Naive thymus-derived CD4-positive, alpha-beta T cell (primary cell): ENCODE measurements at regions of chr3 and their contacts with region 1.

Region 1: GRCh38 chr3:53035825-53036619 is 9.9 kb downstream of the SFMBT1 start:
- DNase-seq: no peak
- ATAC-seq: peak; percentile 27
- H3K4me3 ChIP-seq: no peak overlapping the region
- H3K4me3 Mint-ChIP-seq: peak overlapping the region in 7 of 10 donors; percentile 21 to 66 (median 51)
- H3K27ac ChIP-seq: no peak overlapping the region
- H3K27ac Mint-ChIP-seq: peak overlapping the region in 7 of 9 donors; percentile 25 to 81 (median 68)
- H3K4me1 ChIP-seq: peaks cover 13 to 50% of the 10 kb centered on the region in 2 donors
- H3K4me1 Mint-ChIP-seq: peaks cover 36 to 83% (median 73%) of the 10 kb centered on the region in 7 donors
- H3K27me3 ChIP-seq: no peaks in the 10 kb centered on the region
- H3K27me3 Mint-ChIP-seq: no peaks in the 10 kb centered on the region

Region 2: DNA sequence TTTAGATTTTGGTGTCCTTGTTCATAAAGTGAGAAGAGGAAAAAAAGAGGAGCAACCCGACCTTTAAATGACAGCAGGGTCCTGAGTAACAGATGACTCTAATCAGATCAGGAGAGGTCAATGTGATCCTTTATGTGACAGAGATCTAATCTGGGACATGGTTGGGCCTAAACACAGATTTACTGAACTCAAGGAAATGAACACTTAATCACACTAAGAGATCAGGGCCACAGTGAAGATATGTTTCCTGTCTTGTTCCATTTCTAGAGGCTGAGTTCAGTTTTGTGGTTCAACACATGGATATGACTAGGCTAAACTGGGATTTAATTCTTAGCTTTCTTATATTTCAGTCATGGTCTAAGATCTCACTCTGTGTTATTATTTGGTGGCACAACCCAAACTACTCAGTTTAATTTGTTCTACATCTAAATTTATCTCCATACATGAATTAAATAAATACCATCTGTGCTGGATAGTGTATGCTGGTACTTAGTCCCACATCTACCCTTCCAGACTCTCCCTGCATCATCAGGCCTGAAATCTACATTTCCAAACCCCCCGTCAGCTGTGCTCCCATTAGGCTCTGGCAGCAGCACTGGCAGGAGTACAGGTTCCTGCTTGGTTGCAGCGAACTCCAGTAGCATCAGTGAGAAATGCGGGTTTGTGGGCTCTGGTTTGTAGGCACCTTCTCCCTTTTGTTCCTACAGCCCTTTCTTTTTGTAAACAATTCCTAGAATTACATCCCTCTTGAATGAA is 12.8 kb before region 1 on chr3:
- CTCF ChIA-PET with region 1: interaction called, 3 read pairs
- POLR2A ChIA-PET with region 1: interaction called, 10 read pairs
- intact Hi-C with region 1: loop called in 1 of 2 experiments (anchors 2 kb)
- DNase-seq: no peak
- ATAC-seq: no peak
- H3K4me3 ChIP-seq: no peak overlapping the region
- H3K4me3 Mint-ChIP-seq: peak overlapping the region in 7 of 10 donors; percentile 1 to 58 (median 21)
- H3K27ac ChIP-seq: no peak overlapping the region
- H3K27ac Mint-ChIP-seq: peak overlapping the region in 5 of 9 donors; percentile 32 to 83 (median 51)
- H3K4me1 ChIP-seq: peaks cover 11 to 20% of the 10 kb centered on the region in 2 donors
- H3K4me1 Mint-ChIP-seq: peaks cover 21 to 82% (median 69%) of the 10 kb centered on the region in 7 donors
- H3K27me3 ChIP-seq: no peaks in the 10 kb centered on the region
- H3K27me3 Mint-ChIP-seq: no peaks in the 10 kb centered on the region